Esophagus muscularis mucosa (tissue), 4 donors: ENCODE measurements at regions of chr17 and their contacts with region 1.

Region 1: DNA sequence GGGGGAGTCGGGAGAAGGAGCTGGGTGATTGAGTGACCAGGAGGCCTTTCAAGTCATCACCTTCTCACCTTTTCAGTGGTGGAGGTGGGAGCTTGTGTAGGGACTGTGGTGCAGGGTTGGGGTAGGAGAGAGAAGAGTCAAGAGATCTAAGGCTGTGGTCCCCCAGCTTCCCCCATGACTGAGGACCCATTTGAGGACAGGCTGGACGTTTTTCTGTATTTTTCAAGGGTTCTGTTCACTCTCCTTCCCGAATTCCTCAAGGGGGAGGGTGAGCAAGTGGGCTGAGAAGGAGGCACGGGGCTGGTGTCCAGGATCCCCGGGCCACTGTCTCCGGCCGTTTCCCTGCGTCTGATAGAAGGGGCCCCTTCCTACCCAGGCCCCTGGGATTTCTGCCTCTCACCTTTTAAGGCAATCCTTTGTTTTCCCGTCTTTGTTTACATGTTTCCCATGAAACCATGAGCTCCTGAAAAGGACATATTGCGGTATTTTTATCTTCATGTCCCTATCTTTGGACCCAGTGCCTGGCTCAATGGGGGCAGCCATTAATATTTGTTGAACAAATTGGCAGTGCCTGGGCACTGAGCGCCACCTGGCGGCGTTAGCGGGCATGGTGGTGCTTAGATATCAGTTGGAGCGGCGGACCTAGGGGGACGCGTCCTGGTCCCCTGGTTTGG is 9.2 kb upstream of the CD300A start:
- DNase-seq: no peak
- H3K4me3 ChIP-seq: no peak overlapping the region
- H3K27ac ChIP-seq: no peak overlapping the region
- H3K4me1 ChIP-seq: peaks cover 34 to 42% (median 37%) of the 10 kb centered on the region in 4 donors
- H3K27me3 ChIP-seq: peaks cover 0 to 14% (median 0%) of the 10 kb centered on the region in 4 donors
- CTCF ChIP-seq: peak; percentile 97 to 99 (median 98)
- EP300 ChIP-seq: no peak
- POLR2A ChIP-seq: no peak

Region 2: DNA sequence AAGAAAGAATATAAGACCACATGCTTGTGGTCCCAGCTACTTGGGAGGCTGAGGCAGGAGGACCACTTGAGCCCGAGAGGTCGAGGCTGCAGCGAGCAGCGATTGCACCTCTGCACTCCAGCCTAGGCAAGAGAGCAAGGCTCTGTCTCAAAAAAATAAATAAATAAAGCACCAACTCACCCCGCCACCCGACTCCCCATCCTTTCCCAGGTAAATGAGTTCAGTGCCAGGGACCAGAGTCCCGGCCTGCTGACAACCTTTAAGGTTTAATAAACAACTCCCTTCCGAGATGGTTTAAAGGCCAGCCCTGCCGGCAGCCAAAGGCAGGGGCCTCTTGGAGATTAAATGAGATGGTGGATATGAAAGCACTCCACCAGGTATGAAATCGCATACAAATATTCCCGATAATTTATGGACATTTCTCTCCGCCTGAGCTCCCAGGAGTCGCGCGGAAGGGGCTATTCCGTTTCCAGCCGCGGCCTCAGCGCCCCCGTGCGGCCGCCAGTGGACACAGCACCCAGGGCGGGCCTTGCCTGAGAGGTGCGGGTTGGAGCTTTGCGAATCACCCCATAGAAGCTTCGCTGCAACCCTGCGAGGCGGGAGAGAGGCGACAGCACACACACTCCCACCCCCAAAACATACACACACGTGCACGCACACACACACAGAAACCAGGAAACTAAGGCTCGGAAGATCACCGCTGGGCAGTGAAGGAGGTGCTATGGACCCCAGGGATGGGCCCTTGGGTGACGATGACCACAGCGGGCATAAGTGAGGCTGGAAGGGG is 257.8 kb before region 1 on chr17:
- intact Hi-C with region 1: no loop called
- DNase-seq: peak; percentile 94
- H3K4me3 ChIP-seq: peak overlapping the region in 3 of 4 donors; percentile 21 to 40 (median 25)
- H3K27ac ChIP-seq: no peak overlapping the region
- H3K4me1 ChIP-seq: peaks cover 13 to 24% (median 18%) of the 10 kb centered on the region in 4 donors
- H3K27me3 ChIP-seq: peaks cover 0 to 82% (median 10%) of the 10 kb centered on the region in 4 donors
- CTCF ChIP-seq: peak; percentile 74 to 98 (median 77)
- EP300 ChIP-seq: no peak
- POLR2A ChIP-seq: no peak

Region 3: DNA sequence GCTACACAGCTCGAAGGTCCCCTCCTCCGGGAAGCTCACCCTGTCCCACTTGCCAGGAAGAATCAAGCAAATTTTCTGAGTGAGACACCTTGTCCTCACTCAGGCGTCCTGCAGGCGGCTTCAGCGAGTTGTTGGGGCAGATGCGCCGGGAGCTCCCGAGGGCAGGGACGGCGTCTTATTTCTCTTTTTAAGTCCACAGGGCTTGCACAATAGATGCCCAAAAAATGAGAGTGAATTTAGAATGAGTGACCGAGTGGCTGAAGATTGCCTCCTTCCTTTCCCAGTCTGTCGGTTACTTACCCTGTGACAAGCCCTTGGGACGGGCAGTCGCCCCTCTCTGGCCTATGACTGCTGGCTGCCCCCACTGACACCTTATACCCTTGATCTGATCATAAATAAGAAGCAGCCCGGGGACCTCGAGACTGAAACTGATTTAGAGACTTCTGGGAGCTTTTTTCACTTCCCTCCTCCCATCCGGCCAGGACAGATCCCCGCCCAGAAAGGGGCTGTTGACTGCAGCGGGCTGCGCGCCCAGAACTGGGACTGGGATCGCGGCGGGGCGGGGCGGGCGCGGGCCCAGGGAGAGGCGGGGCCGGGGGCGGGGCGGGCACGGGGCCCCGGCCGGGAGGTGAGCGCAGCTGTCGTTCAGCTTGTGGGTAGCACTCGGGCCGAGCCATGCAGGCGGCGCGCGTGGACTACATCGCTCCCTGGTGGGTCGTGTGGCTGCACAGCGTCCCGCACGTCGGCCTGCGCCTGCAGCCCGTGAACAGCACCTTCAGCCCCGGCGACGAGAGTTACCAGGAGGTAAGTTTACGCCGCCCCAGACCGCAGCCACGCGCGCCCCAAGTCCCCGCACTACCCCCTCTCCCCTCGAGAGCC is 244.1 kb before region 1 on chr17 and contains the start of gene TTYH2:
- intact Hi-C with region 1: loop called (anchors 5 kb)
- DNase-seq: peak; percentile 96
- H3K4me3 ChIP-seq: peak within 1 kb of the TSS; percentile 60 to 73 (median 62)
- H3K27ac ChIP-seq: peak within 1 kb of the TSS; percentile 77 to 86 (median 82)
- H3K4me1 ChIP-seq: peaks cover 41 to 78% (median 56%) of the 10 kb centered on the region in 4 donors
- H3K27me3 ChIP-seq: no peaks in the 10 kb centered on the region
- CTCF ChIP-seq: peak; percentile 25 to 34 (median 29)
- EP300 ChIP-seq: no peak
- POLR2A ChIP-seq: no peak
- total RNA-seq, gene TTYH2: 5.8 to 11.3 (median 7.9) TPM

Region 4: DNA sequence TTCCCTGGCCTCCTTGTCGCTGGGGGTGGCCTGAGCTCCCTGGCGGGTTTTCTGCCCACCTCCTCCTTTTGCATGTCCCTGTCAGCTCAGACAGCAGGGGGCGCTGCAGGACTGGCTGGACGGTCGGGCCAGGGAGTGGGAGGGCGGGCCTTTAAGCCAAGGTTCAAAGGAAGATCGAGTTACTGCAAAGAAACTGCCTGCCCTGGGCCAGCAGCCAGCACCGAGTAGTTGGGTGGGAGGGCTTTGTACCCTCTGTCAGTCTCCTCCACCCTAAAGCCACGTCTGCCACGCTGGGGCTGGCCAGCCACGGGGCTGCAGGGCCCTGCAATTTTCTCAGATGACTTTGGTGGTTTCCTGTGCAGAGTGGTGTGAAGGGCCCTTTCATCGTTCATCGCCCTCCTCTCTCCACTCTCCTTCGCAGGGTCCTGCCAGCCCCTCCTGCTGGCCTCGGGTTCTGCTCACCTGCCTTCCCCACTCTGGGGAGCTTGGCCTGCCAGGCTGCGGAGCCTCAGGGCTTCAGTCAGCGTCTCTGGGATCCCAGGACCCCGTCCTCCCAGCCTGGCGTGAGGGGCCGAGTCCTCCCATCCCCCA is 77.7 kb before region 1 on chr17:
- intact Hi-C with region 1: loop called (anchors 1 kb)
- DNase-seq: peak; percentile 97
- H3K4me3 ChIP-seq: peak overlapping the region; percentile 15 to 25 (median 22)
- H3K27ac ChIP-seq: peak overlapping the region in 3 of 4 donors; percentile 10 to 53 (median 48)
- H3K4me1 ChIP-seq: peaks cover 15 to 19% (median 16%) of the 10 kb centered on the region in 4 donors
- H3K27me3 ChIP-seq: no peaks in the 10 kb centered on the region
- CTCF ChIP-seq: peak; percentile 95 to 97 (median 95)
- EP300 ChIP-seq: no peak
- POLR2A ChIP-seq: no peak

Region 5: DNA sequence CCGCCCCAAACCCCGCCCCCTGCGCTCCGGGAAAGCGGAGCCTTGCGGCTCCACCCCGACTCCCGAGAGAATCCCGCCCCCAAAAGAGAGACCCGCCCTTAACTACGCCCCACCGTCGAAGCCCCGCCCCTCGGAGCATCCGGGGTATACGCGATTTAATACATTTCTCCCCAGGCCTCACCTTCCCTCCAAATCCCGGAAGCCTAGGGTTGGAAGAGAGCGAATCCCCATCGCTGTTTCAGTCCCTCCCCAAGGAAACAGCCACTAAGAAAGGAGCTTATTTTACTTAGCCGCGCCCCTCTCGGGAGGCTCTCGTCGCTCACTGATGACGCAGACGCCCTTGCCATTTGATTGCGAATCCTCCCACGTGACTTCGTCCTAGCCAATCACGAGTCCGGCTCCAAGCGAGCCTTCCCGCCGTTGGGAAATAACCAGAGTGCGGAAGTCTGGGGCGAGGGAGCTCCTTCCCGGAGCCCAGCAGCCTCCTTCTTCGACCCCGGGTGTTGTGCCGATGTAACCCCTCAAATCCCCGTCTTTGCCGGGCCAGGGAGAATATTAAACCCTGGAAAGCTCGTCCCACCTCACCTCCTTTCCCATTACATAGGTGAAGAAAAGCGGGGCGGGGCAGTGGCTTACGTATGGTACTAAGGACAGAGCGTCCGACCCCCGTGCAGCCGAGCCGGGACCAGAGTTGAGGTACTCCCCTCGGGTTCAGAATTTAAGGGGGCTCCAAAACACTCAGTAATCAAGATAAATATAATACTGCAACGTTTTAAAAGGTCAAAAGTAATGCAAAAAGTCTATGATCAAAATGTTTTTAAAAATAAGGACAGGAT is 416.0 kb after region 1 on chr17:
- intact Hi-C with region 1: loop called (anchors 10 kb)
- DNase-seq: peak; percentile 100
- H3K4me3 ChIP-seq: peak overlapping the region; percentile 62 to 69 (median 66)
- H3K27ac ChIP-seq: peak overlapping the region; percentile 84 to 95 (median 90)
- H3K4me1 ChIP-seq: peaks cover 21 to 32% (median 24%) of the 10 kb centered on the region in 4 donors
- H3K27me3 ChIP-seq: peaks cover 0 to 7% (median 0%) of the 10 kb centered on the region in 4 donors
- CTCF ChIP-seq: peak in 1 of 3 experiments; percentile 38
- EP300 ChIP-seq: no peak
- POLR2A ChIP-seq: peak; percentile 97